ENCODE measurements at regions of chr6 and their contacts with region 1.

Region 1: DNA sequence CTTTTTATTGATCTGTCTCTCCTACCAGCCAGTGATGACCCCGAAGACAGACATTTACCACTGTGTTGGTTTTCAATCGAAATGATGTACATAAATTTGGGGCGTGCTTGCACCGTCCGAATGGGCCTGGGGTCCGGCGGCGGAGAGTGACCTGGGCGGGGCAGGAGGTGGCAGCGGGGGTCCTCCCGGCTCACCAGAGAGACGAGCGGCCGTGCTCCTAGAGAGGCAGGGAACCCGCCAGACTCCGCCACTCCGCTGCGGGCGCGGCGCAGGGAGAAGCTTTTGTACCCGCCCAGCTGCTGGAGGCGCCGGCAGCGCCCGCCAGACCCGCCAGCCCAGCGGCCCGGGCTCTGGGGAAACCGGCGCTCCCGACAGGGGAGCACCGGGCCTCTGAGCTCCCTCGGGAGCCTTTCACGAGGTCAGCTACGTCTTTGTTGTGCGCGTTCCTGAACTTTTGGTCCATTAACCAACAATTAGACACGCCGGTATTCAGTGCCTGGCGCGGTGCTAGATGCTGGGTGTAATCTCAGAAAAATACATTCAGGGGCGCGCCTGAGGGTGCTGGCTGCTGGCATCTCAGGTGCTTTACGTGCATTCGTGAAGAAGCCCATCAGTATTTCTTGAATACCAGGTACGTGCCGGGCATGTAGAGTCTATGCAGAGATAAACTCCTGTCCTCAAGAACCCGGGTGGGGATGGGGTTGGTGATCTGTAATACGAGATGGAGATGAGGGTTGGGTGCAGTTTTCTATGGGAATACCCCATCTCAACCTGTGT is at the start of gene PGBD1:
- DNase-seq: peak; percentile 76 to 92 (median 86)
- ATAC-seq: peak; percentile 97
- H3K4me3 ChIP-seq: peak within 1 kb of the TSS; percentile 73
- H3K27ac ChIP-seq: peak within 1 kb of the TSS; percentile 48
- H3K4me1 ChIP-seq: peaks cover 4 to 7% of the 10 kb centered on the region in 2 experiments; a peak in 2 of 5 replicates
- H3K27me3 ChIP-seq: no peaks in the 10 kb centered on the region
- CTCF ChIP-seq: no peak; a peak in 1 of 6 replicates
- EP300 ChIP-seq: no peak
- POLR2A ChIP-seq: peak; percentile 82
- RAD21 ChIP-seq: peak; percentile 28 to 35
- polyA plus RNA-seq, gene PGBD1: 3.3 to 3.5 TPM

Region 2: GRCh38 chr6:28245206-28245941 is 36.1 kb before region 1 on chr6:
- CTCF ChIA-PET with region 1: no interaction called
- POLR2A ChIA-PET with region 1: interaction called, 11 read pairs
- in situ Hi-C with region 1: no loop called
- intact Hi-C with region 1: no loop called
- DNase-seq: no peak
- ATAC-seq: no peak
- H3K4me3 ChIP-seq: no peak overlapping the region
- H3K27ac ChIP-seq: no peak overlapping the region
- H3K4me1 ChIP-seq: no peaks in the 10 kb centered on the region
- H3K27me3 ChIP-seq: no peaks in the 10 kb centered on the region
- CTCF ChIP-seq: no peak
- EP300 ChIP-seq: no peak
- POLR2A ChIP-seq: no peak
- RAD21 ChIP-seq: no peak

Measured in K562 (cell line).